ENCODE measurements at regions of chr14 and their contacts with region 1.

Region 1: DNA sequence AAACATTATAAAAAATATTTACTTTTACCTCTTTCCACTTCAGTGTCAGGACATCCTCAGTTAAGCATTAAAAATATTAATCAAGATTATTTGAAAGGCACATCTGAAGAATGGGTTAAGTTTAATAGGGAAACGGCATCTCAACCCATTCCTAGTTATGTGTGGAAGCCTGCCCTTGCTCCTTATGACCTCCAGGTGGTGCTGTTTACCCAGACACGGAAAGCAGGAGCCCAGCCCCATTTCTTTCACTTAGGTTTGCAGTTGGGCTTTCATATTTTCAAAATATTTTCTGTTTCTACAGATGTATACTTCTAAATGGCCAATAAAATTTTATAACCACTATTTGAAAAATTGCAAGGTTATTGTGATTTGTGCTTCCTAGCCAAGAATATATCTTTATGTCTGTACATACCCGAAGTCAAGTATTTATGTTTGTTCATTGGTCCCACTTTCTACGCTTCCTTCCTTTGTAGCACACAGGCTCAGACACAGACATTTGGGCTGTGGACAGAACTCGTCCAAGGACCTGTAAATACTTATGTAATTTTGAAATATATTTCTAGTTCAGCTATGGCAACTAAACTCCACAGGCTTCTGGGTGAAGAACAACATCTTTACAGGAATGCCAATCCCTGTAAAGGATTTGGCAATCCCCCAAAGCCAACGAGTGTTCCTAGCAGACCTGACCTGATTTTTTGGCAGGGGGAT is 247.1 kb downstream of the AKAP6 start:
- DNase-seq: peak; percentile 80
- H3K4me3 Mint-ChIP-seq: no peak overlapping the region
- H3K27ac Mint-ChIP-seq: no peak overlapping the region
- H3K4me1 Mint-ChIP-seq: no peaks in the 10 kb centered on the region
- H3K27me3 Mint-ChIP-seq: peaks cover 21% of the 10 kb centered on the region

Region 2: GRCh38 chr14:33432407-33433023 is 856.3 kb after region 1 on chr14:
- intact Hi-C with region 1: loop called (anchors 10 kb)
- DNase-seq: no peak
- H3K4me3 Mint-ChIP-seq: no peak overlapping the region
- H3K27ac Mint-ChIP-seq: no peak overlapping the region
- H3K4me1 Mint-ChIP-seq: peaks cover 9% of the 10 kb centered on the region
- H3K27me3 Mint-ChIP-seq: no peaks in the 10 kb centered on the region

Region 3: GRCh38 chr14:33792720-33793368 is 1216.6 kb after region 1 on chr14:
- intact Hi-C with region 1: loop called (anchors 1 kb)
- DNase-seq: peak; percentile 91
- H3K4me3 Mint-ChIP-seq: peak overlapping the region; percentile 78
- H3K27ac Mint-ChIP-seq: no peak overlapping the region
- H3K4me1 Mint-ChIP-seq: peaks cover 21% of the 10 kb centered on the region
- H3K27me3 Mint-ChIP-seq: peaks cover 52% of the 10 kb centered on the region

Region 4: GRCh38 chr14:34300882-34301734 is 1724.9 kb after region 1 on chr14:
- intact Hi-C with region 1: loop called (anchors 1 kb)
- DNase-seq: peak; percentile 78
- H3K4me3 Mint-ChIP-seq: no peak overlapping the region
- H3K27ac Mint-ChIP-seq: no peak overlapping the region
- H3K4me1 Mint-ChIP-seq: no peaks in the 10 kb centered on the region
- H3K27me3 Mint-ChIP-seq: no peaks in the 10 kb centered on the region

Region 5: GRCh38 chr14:34322940-34323418 is 1746.7 kb after region 1 on chr14:
- intact Hi-C with region 1: loop called (anchors 5 kb)
- DNase-seq: peak; percentile 90
- H3K4me3 Mint-ChIP-seq: no peak overlapping the region
- H3K27ac Mint-ChIP-seq: no peak overlapping the region
- H3K4me1 Mint-ChIP-seq: no peaks in the 10 kb centered on the region
- H3K27me3 Mint-ChIP-seq: peaks cover 6% of the 10 kb centered on the region

Measured in activated CD4-positive, alpha-beta T cell treated with anti-CD3 and anti-CD28 coated beads, Interleukin-2, amount 10 ng/mL, durations not matched to agents 24 days and 14 days (primary cell).